SK-N-SH (cell line): ENCODE measurements at regions of chr6 and their contacts with region 1.

Region 1: GRCh38 chr6:89792873-89793272 is 26.7 kb downstream of the MDN1 start:
- DNase-seq: peak; percentile 47
- H3K4me3 ChIP-seq: no peak overlapping the region
- H3K27ac ChIP-seq: no peak overlapping the region
- H3K4me1 ChIP-seq: no peaks in the 10 kb centered on the region; a peak in 1 of 4 replicates
- H3K27me3 ChIP-seq: no peaks in the 10 kb centered on the region
- CTCF ChIP-seq: peak; percentile 56
- EP300 ChIP-seq: no peak
- RAD21 ChIP-seq: peak; percentile 51

Region 2: DNA sequence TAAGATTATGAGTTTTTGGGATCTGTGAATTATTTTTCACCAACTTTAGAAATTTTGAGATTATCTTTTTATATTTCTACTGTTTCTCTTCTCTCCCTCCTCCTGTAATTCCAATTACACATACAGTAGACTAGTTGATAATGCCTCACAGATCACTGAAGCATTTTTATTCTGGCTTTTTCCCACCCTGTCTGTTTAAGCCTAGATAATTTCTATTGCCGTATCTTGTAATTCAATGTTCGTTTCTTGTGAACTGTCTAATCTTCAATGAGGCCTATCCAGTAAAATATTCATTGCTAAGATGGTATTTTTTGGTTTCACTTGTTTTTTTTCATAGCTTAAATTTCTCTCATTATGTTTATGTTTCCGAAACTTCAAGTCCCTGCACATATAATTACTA is 14.7 kb after region 1 on chr6:
- CTCF ChIA-PET with region 1: interaction called, 11 read pairs
- POLR2A ChIA-PET with region 1: no interaction called
- DNase-seq: no peak
- H3K4me3 ChIP-seq: no peak overlapping the region
- H3K27ac ChIP-seq: no peak overlapping the region
- H3K4me1 ChIP-seq: no peaks in the 10 kb centered on the region
- H3K27me3 ChIP-seq: no peaks in the 10 kb centered on the region
- CTCF ChIP-seq: no peak
- EP300 ChIP-seq: no peak
- RAD21 ChIP-seq: no peak